A673 (cell line): ENCODE measurements at regions of chr19 and their contacts with region 1.

Region 1: DNA sequence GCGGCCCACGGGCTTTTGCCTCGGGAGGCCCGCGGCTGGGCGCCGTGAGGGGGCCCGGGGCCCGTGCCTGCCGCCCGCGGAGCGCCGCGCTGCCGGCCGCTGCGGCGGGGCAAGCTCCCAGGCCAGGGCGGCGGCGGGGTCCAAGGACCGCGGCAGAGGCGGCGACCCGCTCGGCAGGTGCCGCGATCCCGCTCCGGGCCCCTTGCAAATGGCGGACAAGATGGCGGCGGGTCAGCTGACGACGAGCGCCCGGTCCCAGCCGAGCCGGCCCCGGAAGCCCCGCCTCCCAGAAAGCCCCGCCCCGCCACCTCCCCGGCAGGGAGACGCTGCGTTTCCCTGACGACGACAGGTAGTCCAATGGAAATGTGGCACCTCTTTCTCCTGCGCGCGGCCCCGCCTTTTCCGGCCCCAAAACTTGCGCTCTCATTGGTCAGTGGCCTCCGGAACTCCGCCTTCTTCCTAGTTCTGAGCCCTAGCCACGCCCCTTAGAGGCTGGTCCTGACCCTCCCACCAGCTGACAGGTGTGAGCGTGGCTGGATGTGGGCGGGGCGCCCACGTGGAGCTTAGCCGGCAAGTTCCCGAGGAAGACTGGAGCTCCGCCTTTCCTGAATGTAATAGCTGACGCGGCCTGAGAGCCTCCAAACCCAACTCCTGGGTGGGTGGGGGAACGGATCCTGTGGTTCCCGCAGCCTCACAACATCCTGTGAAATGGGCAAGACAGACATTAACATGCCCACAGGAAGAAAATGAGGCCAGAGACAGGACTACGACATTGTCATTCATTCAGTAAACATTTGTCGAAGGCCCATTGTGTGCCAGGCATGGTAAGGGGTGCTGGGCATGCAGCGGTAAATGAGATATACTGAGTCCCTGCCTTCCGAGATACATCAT is at the start of gene AP3D1:
- DNase-seq: peak; percentile 100
- H3K4me3 ChIP-seq: peak within 1 kb of the TSS; percentile 99
- H3K27ac ChIP-seq: peak within 1 kb of the TSS; percentile 91
- H3K4me1 ChIP-seq: peaks cover 17% of the 10 kb centered on the region
- H3K27me3 ChIP-seq: no peaks in the 10 kb centered on the region
- CTCF ChIP-seq: no peak
- total RNA-seq, gene AP3D1: 148 and 154 TPM in 2 replicates

Region 2: GRCh38 chr19:2188708-2189385 is 37.3 kb after region 1 on chr19:
- CTCF ChIA-PET with region 1: no interaction called
- POLR2A ChIA-PET with region 1: no interaction called
- intact Hi-C with region 1: no loop called
- DNase-seq: no peak
- H3K4me3 ChIP-seq: no peak overlapping the region
- H3K27ac ChIP-seq: no peak overlapping the region
- H3K4me1 ChIP-seq: no peaks in the 10 kb centered on the region
- H3K27me3 ChIP-seq: no peaks in the 10 kb centered on the region
- CTCF ChIP-seq: no peak

Region 3: GRCh38 chr19:2227415-2228156 is 76.0 kb after region 1 on chr19:
- CTCF ChIA-PET with region 1: interaction called, 11 read pairs
- POLR2A ChIA-PET with region 1: no interaction called
- intact Hi-C with region 1: no loop called
- DNase-seq: no peak
- H3K4me3 ChIP-seq: no peak overlapping the region
- H3K27ac ChIP-seq: no peak overlapping the region
- H3K4me1 ChIP-seq: no peaks in the 10 kb centered on the region
- H3K27me3 ChIP-seq: no peaks in the 10 kb centered on the region
- CTCF ChIP-seq: no peak

Region 4: GRCh38 chr19:2273356-2274184 is 122.0 kb after region 1 on chr19:
- CTCF ChIA-PET with region 1: no interaction called
- POLR2A ChIA-PET with region 1: no interaction called
- intact Hi-C with region 1: loop called (anchors 5 kb)
- DNase-seq: peak; percentile 93
- H3K4me3 ChIP-seq: peak overlapping the region; percentile 100
- H3K27ac ChIP-seq: peak overlapping the region; percentile 47
- H3K4me1 ChIP-seq: peaks cover 21% of the 10 kb centered on the region
- H3K27me3 ChIP-seq: no peaks in the 10 kb centered on the region
- CTCF ChIP-seq: peak; percentile 98

Region 5: GRCh38 chr19:2636897-2637683 is 485.5 kb after region 1 on chr19:
- CTCF ChIA-PET with region 1: interaction called, 10 read pairs
- POLR2A ChIA-PET with region 1: no interaction called
- intact Hi-C with region 1: no loop called
- DNase-seq: peak; percentile 65
- H3K4me3 ChIP-seq: no peak overlapping the region
- H3K27ac ChIP-seq: no peak overlapping the region
- H3K4me1 ChIP-seq: peaks cover 7% of the 10 kb centered on the region
- H3K27me3 ChIP-seq: peaks cover 13% of the 10 kb centered on the region
- CTCF ChIP-seq: peak; percentile 97